ENCODE measurements at regions of chr2 and their contacts with region 1.

Region 1: DNA sequence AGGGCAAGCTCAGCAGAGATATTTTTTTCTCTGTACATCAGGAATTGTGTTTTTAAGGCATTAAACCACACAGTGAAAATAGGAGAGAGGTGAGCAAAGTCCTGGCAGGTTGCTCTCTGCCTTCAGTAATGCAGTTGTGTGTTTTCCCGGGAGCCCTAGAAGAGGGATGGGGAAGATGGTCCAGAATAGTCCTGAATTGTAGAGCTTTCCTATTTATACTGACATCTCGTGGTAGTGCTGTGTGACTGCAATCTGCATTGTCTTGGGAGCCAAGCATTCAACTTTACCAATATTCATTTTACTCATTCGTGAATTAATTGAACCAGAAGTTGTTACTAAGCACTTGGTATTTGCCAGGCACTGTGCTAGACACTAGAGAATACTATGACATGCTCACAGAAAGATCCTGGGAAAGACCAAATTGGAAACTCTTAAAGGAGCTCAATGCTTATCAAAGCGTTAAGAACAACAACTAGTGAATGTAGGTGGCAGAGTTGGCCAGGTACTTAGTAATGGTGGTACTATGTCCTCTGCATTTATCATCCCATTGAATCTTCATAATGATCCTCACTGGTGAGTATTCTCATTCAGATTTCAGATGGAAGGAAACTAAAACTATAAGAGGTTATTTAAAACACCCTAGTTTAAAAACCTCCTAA is 214.6 kb downstream of the TRIB2 start:
- DNase-seq: no peak
- H3K4me3 Mint-ChIP-seq: no peak overlapping the region
- H3K27ac Mint-ChIP-seq: no peak overlapping the region
- H3K4me1 Mint-ChIP-seq: peaks cover 8% of the 10 kb centered on the region
- H3K27me3 Mint-ChIP-seq: peaks cover 2% of the 10 kb centered on the region

Region 2: DNA sequence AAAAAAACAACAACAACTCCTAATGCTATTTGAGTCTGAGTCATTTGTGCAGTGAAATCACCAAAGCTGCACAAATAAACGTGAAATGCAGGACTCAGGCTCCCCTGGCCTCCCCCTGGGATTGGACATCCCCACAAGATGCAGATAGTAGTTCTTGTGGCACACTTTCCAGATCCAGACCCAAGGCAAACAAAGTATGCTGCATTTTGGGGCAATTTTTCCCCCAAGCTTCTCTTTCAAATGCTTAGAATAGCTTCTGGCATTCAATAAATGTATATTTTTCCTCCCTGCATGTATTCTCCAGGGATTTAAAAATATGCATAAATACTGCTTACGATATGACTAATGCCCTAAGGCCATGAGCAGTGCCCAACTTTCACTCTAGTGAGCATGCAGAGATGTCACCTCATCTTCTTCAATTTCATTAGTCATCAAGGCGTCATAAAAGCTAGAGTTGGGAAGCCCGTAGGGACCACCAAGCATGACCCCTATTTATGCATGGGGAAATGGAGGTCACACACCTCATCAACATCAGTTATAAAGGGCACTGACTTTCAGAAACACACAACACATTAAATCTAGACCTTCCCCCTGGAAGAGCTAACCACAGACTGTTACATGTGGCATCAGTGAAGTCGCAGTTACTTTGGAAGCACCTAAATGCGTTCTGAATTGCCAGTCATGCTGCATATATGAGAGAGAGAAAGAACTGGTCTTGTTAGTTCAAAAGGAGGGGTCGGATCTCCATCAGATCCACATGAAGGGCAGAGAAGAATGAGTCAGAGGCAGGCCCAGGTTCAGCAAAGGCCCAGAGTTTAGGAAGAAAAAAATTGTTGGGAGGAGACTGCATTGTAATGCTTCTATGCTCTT is 810.8 kb before region 1 on chr2:
- CTCF ChIA-PET with region 1: no interaction called
- intact Hi-C with region 1: loop called (anchors 10 kb)
- DNase-seq: no peak
- H3K4me3 Mint-ChIP-seq: no peak overlapping the region
- H3K27ac Mint-ChIP-seq: no peak overlapping the region
- H3K4me1 Mint-ChIP-seq: peaks cover 2% of the 10 kb centered on the region
- H3K27me3 Mint-ChIP-seq: no peaks in the 10 kb centered on the region

Region 3: DNA sequence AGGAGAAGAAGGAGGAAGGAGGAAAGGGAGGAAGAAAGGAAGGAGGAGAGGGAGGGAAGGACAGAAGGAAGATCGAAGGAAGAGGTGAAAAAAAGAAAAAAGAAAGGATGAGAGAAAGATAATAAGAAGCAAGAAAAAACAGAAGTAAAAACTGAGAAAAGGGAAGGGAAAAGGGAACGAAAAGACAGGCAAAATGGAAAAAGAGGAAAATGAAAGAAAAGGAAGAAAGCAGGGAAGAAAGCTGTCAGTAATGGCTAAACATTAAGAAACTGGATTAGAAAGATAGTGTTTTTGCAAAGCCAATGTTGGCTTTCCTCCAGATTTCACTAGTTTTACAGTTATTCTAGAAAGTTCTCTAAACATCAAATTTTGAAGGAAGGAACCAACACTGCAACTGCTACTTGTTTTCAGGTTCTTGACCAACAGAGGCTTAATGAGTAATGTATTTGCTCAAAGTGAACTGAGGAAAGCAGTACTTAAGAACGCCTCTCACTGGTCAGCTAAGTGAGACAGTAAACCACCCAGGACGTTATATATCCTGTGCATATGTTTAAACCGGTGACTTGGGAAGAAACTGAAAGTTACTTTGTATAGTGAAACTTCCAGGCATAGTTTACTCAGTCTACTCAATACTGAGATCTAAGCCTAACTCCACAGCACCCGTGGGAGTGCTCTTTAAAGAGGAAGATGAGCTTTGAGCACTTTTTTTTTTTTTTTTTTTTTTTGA is 500.7 kb before region 1 on chr2:
- CTCF ChIA-PET with region 1: no interaction called
- intact Hi-C with region 1: loop called (anchors 10 kb)
- DNase-seq: peak; percentile 36
- H3K4me3 Mint-ChIP-seq: no peak overlapping the region
- H3K27ac Mint-ChIP-seq: no peak overlapping the region
- H3K4me1 Mint-ChIP-seq: peaks cover 30% of the 10 kb centered on the region
- H3K27me3 Mint-ChIP-seq: no peaks in the 10 kb centered on the region

Region 4: DNA sequence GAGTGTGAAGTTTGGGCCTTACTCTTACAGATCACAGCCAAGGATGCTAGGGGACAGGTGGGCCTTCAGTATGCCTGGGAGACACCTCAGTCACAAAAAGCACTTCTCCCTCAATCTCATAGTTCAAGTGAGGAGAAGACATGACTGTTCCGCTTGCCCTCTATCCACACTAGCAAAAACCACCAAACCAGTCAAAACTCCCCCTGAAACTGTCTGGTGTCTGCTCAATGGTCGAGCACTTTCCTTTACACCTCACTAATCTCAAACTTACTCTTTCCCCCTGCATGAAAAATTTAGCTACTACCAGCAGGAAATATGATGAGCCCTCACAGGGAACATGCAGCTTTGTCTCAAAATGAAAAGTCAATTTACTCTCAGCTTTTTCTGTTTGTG is 17.6 kb after region 1 on chr2:
- CTCF ChIA-PET with region 1: interaction called, 13 read pairs
- intact Hi-C with region 1: no loop called
- DNase-seq: peak; percentile 29
- H3K4me3 Mint-ChIP-seq: no peak overlapping the region
- H3K27ac Mint-ChIP-seq: no peak overlapping the region
- H3K4me1 Mint-ChIP-seq: peaks cover 13% of the 10 kb centered on the region
- H3K27me3 Mint-ChIP-seq: peaks cover 18% of the 10 kb centered on the region

Region 5: GRCh38 chr2:13056259-13056843 is 125.0 kb after region 1 on chr2:
- CTCF ChIA-PET with region 1: no interaction called
- intact Hi-C with region 1: no loop called
- DNase-seq: no peak
- H3K4me3 Mint-ChIP-seq: no peak overlapping the region
- H3K27ac Mint-ChIP-seq: no peak overlapping the region
- H3K4me1 Mint-ChIP-seq: no peaks in the 10 kb centered on the region
- H3K27me3 Mint-ChIP-seq: peaks cover 11% of the 10 kb centered on the region